ENCODE measurements at regions of chr13 and their contacts with region 1.

Region 1: GRCh38 chr13:49495783-49496762 is at the start of gene PHF11:
- DNase-seq: peak; percentile 96
- H3K4me3 Mint-ChIP-seq: peak within 1 kb of the TSS; percentile 95
- H3K27ac Mint-ChIP-seq: peak within 1 kb of the TSS; percentile 99
- H3K4me1 Mint-ChIP-seq: peaks cover 51% of the 10 kb centered on the region
- H3K27me3 Mint-ChIP-seq: no peaks in the 10 kb centered on the region
- total RNA-seq, gene PHF11: 56.8 and 60.8 TPM in 2 replicates

Region 2: DNA sequence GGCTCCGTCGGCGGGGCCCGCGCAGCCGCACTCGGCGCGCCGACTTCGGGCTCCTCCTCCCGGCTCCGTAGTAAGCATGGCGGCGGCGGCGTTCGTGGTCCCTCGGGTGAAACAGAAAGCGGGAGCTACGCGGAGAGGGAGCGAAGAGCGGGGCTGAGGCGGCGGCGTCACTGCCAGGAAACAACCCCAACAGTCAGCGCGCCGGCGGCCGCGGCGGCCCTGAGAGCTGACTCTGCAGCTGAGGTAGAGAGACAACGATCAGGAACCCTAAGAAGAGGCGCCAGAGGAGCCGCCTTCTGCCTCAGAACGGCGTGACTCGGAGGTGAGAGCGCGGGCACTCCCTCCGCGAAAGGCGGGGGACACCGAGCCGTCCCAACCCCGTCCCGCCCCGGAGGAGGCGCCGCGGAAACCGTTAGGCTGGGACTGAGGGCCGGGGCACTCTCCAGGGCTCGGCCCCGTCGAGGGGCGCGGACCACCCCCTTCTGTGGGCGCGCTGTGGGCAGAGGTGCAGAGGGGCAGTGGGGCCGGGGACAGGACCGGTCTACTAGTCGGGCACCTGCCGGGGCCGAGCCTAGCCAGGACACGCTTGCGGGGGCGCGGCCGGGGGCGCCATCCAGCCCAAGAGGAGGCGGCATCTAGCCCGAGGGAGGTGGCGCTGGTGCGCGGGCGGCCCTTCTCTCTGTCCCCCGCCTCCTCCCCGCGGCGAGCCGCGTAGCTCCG is 520.1 kb before region 1 on chr13 and contains the start of gene FNDC3A:
- intact Hi-C with region 1: loop called (anchors 10 kb)
- DNase-seq: peak; percentile 97
- H3K4me3 Mint-ChIP-seq: peak within 1 kb of the TSS; percentile 96
- H3K27ac Mint-ChIP-seq: peak within 1 kb of the TSS; percentile 100
- H3K4me1 Mint-ChIP-seq: peaks cover 35% of the 10 kb centered on the region
- H3K27me3 Mint-ChIP-seq: no peaks in the 10 kb centered on the region
- total RNA-seq, gene FNDC3A: 22.1 and 23.5 TPM in 2 replicates

Region 3: DNA sequence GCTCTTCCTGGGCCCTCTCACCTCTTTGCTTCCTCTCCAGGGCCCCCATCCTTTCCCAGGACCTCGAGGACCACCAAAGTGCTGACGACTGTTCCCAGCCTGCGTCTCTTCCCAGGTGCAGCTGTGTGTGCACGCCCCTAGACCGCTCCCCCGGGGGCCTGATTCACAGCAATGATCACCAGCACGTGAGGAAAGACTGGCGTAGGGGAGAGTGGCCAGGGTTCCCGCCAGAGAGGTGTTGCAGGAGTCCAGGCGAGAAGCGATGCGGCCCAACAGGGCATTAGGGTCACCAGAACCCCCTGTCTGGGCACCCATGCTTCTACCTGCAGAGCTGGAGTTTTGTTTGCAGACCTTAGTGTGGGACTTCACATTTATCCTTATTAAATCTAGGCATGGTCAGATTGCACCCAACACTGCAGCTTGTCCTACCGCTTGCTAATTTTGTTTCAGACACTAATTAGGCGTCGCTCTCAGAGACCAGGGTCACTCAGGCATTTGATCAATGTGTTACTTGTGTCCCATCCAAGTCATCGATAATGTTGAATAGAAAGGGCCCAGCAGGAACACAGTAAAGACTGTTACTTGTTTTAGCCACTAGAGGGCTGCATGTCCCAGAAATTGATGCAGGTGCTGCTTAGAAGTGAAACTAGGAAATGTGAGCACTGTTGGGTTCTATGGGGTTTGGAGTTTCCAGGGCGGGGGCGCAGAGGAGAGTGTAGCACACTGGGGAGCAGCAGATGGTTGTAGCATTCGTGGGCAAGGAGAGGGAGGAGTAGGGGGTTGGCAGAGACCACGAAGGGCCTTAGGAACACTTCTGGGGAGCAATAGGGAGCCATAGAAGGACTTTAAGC is 195.1 kb before region 1 on chr13:
- intact Hi-C with region 1: loop called (anchors 5 kb)
- DNase-seq: peak; percentile 91
- H3K4me3 Mint-ChIP-seq: peak overlapping the region; percentile 47
- H3K27ac Mint-ChIP-seq: peak overlapping the region; percentile 21
- H3K4me1 Mint-ChIP-seq: peaks cover 12% of the 10 kb centered on the region
- H3K27me3 Mint-ChIP-seq: no peaks in the 10 kb centered on the region

Region 4: GRCh38 chr13:49540552-49540951 is 44.5 kb after region 1 on chr13:
- intact Hi-C with region 1: loop called (anchors 5 kb)
- DNase-seq: peak; percentile 72
- H3K4me3 Mint-ChIP-seq: peak overlapping the region; percentile 65
- H3K27ac Mint-ChIP-seq: peak overlapping the region; percentile 65
- H3K4me1 Mint-ChIP-seq: peaks cover 18% of the 10 kb centered on the region
- H3K27me3 Mint-ChIP-seq: no peaks in the 10 kb centered on the region

Region 5: DNA sequence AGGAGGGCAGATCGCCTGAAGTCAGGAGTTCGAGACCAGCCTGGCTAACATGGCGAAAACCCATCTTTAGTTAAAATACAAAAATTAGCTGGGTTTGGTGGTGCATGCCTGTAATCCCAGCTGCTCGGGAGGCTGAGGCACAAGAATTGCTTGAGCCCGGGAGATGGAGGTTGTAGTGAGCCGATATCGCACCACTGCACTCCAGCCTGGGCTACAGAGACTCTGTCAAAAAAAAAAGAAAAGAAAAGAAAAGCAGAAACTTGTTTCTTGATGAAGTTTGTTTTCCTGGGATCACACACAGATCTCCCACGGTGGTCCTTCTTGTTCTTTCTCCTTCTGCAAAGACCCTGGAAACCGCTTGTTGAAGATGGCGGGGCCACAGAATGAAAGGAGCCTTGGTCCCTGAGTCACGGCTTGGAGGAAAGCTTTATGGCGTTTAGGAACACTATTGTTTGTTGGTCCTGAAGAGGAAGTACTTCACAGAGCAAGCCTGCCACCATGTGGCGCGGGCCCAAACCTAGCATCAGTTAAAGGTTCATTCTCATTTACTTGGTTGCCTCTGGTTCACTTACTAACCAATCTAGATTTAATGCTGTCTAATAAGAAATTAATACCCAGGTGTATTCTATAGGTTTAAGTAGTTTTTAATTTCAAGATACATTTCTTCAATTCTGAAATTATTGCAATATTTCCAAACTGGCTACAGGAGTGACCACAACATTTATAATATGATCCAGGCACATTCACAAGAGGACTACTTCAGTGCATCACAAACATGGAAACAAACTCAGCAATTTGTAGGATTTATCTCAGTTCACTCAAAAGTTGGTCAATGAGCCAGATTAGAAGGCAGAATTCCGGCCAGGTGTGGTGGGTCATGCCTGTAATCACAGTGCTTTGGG is 110.9 kb after region 1 on chr13:
- intact Hi-C with region 1: loop called (anchors 5 kb)
- DNase-seq: peak; percentile 93
- H3K4me3 Mint-ChIP-seq: peak overlapping the region; percentile 77
- H3K27ac Mint-ChIP-seq: peak overlapping the region; percentile 64
- H3K4me1 Mint-ChIP-seq: peaks cover 2% of the 10 kb centered on the region
- H3K27me3 Mint-ChIP-seq: peaks cover 3% of the 10 kb centered on the region

Region 6: DNA sequence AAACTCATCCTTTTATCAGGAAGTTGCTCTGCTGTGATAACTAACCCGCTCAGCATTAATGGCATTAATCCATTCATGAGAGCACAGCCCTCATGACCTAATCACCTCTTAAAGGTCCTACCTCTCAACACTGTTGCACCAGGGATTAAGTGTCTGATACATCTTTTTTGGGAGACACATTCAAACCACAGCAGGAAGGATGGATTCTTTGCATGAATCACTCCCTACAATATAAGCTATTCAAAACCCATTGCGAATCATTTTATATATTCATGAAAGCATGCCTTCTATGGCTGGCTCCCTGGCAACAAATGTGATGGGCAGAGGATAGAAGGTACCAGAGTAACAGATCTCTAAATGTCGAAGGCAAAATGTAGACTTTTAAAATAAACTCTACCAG is 159.8 kb after region 1 on chr13:
- intact Hi-C with region 1: no loop called
- DNase-seq: no peak
- H3K4me3 Mint-ChIP-seq: no peak overlapping the region
- H3K27ac Mint-ChIP-seq: no peak overlapping the region
- H3K4me1 Mint-ChIP-seq: no peaks in the 10 kb centered on the region
- H3K27me3 Mint-ChIP-seq: no peaks in the 10 kb centered on the region

Region 7: GRCh38 chr13:49679246-49679645 is 183.2 kb after region 1 on chr13:
- intact Hi-C with region 1: no loop called
- DNase-seq: peak; percentile 65
- H3K4me3 Mint-ChIP-seq: no peak overlapping the region
- H3K27ac Mint-ChIP-seq: no peak overlapping the region
- H3K4me1 Mint-ChIP-seq: peaks cover 13% of the 10 kb centered on the region
- H3K27me3 Mint-ChIP-seq: no peaks in the 10 kb centered on the region

Region 8: DNA sequence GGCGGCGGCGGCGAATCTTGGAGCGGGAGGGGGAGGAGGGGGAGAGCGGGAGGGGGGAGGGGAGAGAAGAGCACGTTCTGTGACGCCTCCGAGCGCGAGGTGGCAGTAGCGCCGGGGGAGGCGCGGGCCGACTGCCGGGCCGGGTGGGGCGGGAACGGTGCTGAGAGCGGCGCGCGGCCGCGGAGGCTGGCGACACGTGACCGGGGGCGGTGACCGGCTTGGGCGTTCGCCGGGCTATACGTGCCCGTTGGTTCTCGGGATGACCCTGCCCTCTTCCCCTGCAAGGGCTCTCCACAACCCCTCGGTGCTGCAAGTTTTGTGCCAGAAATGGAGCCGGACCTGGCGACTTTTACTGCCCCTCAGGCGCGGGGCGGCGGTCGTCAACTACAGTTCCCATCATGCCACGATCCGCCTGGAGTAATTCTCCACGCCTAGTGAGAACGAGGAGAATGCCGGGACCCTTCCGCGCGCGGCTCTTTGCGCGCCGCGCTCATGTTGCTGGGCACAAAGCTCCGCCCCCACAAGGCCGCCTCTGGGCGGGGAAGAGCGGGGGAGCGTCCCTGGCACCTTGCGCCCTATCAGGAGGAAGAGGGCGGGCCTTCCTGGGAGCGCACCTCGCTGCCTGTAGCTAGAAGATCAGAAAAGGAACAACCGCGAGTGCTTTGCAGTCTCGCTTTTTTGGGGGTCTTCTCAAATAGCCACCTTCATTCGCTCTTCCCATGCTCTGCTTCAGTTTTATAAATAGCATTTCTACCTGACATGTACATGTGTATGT is 296.7 kb after region 1 on chr13 and contains the start of gene KPNA3:
- intact Hi-C with region 1: loop called (anchors 1 kb)
- DNase-seq: peak; percentile 98
- H3K4me3 Mint-ChIP-seq: peak within 1 kb of the TSS; percentile 93
- H3K27ac Mint-ChIP-seq: peak within 1 kb of the TSS; percentile 99
- H3K4me1 Mint-ChIP-seq: peaks cover 30% of the 10 kb centered on the region
- H3K27me3 Mint-ChIP-seq: no peaks in the 10 kb centered on the region
- total RNA-seq, gene KPNA3: 56.5 and 58.8 TPM in 2 replicates

Measured in activated CD4-positive, alpha-beta T cell treated with anti-CD3 and anti-CD28 coated beads, Interleukin-2, amount 10 ng/mL, durations not matched to agents 24 days and 14 days (primary cell).